Common myeloid progenitor, CD34-positive (primary cell): ENCODE measurements at regions of chr1 and their contacts with region 1.

Region 1: DNA sequence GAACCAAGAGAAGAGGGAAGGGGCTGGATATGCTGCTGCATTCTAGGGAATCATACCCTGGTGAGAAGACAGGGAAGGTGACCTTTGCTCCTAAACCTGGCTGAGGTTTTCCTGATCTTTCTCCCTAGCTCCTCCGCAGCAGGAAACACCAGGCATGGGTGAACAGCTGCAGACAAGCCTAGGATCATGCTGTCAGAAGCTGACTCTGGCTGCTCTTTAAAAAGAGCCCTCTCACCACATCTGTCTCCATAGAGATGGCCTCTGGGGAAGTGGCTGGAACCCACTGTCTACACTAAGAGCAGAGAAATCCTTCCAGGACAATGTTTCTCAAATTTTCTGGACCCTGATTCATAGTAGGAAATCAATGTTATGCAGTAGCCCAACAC is 57.6 kb downstream of the CD34 start:
- DNase-seq: peak in 1 of 3 donors; percentile 50
- H3K4me3 ChIP-seq: peak overlapping the region in 3 of 7 experiments; percentile 6 to 26 (median 8)
- H3K27ac ChIP-seq: no peak overlapping the region
- H3K4me1 ChIP-seq: peaks cover 16 to 85% (median 67%) of the 10 kb centered on the region in 4 experiments
- H3K27me3 ChIP-seq: no peaks in the 10 kb centered on the region

Region 2: GRCh38 chr1:207863893-207864535 is 10.6 kb after region 1 on chr1:
- CTCF ChIA-PET with region 1: interaction called, 10 read pairs
- POLR2A ChIA-PET with region 1: no interaction called
- DNase-seq: peak; percentile 69 to 80 (median 74)
- H3K4me3 ChIP-seq: peak overlapping the region in 3 of 7 experiments; percentile 40 to 53 (median 44)
- H3K27ac ChIP-seq: peak overlapping the region; percentile 3 to 25
- H3K4me1 ChIP-seq: peaks cover 7 to 90% (median 78%) of the 10 kb centered on the region in 4 experiments
- H3K27me3 ChIP-seq: no peaks in the 10 kb centered on the region

Region 3: GRCh38 chr1:207876131-207876530 is 22.8 kb after region 1 on chr1:
- CTCF ChIA-PET with region 1: interaction called, 12 read pairs
- POLR2A ChIA-PET with region 1: no interaction called
- DNase-seq: no peak
- H3K4me3 ChIP-seq: no peak overlapping the region
- H3K27ac ChIP-seq: no peak overlapping the region
- H3K4me1 ChIP-seq: peaks cover 26 to 60% (median 46%) of the 10 kb centered on the region in 4 experiments
- H3K27me3 ChIP-seq: no peaks in the 10 kb centered on the region